Activated naive CD4-positive, alpha-beta T cell treated with anti-CD3 and anti-CD28 coated beads for 36 hours (primary cell): ENCODE measurements at regions of chr17 and their contacts with region 1.

Region 1: DNA sequence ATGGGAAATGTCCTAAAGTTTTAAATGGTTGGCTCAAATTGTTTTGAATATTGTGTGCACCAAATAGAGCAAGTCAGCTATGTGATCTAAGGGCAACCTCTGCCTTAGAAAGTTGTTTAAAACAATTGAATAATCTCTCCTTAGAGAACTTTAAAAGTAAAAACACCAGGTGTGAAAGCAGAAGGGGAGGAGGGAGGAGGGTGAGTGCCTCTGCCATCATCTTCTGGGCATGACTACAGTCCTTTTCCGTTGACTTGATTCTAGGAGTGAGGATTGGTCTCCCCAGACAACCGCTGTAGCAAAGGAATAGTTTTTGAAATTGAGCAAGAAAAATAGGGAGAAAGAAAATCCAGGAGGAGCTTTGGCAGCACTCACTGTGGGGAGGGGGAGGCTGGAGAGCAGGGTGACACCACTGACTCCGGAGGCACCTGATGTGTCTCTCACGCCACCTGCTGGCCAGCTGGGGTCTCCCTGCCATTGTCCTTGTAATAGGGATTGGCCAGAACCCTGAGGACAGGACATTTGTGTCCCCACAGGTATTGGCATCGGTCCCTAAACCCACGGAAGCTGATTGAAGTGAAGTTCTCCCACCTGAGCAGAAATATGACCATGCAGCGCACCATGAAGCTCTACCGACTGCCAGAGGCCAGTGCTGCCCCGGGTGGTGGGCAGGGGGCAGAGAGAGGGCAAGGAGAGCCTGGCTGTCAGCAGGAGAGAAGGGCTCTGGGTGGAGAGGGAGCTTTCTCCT is 33.3 kb downstream of the PLCD3 start:
- DNase-seq: peak; percentile 89
- H3K4me3 Mint-ChIP-seq: no peak overlapping the region
- H3K27ac Mint-ChIP-seq: no peak overlapping the region
- H3K4me1 Mint-ChIP-seq: no peaks in the 10 kb centered on the region
- H3K27me3 Mint-ChIP-seq: no peaks in the 10 kb centered on the region

Region 2: DNA sequence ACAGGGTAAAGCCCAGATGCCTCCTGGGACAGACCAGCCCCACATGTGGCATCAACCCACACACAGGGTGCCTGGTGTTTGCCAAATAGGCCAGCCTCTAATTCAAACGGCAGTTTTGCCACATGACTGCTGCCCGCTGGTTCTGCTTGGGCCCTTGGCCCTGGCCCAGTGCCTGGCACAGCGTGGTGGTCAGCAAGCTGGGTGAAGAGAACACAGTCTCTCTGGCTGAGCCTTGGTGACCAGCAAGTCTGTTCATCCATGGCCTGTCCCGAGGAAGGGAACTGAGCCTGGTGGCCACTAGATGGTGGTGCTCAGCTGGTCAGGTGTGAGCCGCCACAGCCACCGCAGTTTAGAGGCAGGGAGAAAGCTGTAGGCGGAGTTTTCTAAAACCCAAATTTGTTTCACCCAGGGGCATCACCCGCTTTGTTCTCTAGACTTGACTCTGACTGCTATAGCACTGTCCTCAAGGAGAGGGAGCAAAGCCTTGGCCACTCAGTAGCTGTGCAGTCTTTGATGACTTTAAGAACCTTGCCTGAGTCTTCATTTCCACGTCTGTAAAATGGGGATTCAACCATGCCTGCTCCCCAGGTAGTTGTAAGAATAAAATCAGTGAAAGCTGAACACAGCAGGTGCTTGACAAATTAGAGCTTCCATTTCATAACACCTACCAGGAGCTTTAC is 179.0 kb before region 1 on chr17:
- CTCF ChIA-PET with region 1: interaction called, 3 read pairs
- intact Hi-C with region 1: loop called (anchors 1 kb)
- DNase-seq: peak; percentile 84
- H3K4me3 Mint-ChIP-seq: no peak overlapping the region
- H3K27ac Mint-ChIP-seq: no peak overlapping the region
- H3K4me1 Mint-ChIP-seq: no peaks in the 10 kb centered on the region
- H3K27me3 Mint-ChIP-seq: peaks cover 18% of the 10 kb centered on the region

Region 3: GRCh38 chr17:44981221-44981968 is 117.6 kb before region 1 on chr17:
- CTCF ChIA-PET with region 1: no interaction called
- intact Hi-C with region 1: no loop called
- DNase-seq: no peak
- H3K4me3 Mint-ChIP-seq: no peak overlapping the region
- H3K27ac Mint-ChIP-seq: no peak overlapping the region
- H3K4me1 Mint-ChIP-seq: no peaks in the 10 kb centered on the region
- H3K27me3 Mint-ChIP-seq: peaks cover 16% of the 10 kb centered on the region

Region 4: DNA sequence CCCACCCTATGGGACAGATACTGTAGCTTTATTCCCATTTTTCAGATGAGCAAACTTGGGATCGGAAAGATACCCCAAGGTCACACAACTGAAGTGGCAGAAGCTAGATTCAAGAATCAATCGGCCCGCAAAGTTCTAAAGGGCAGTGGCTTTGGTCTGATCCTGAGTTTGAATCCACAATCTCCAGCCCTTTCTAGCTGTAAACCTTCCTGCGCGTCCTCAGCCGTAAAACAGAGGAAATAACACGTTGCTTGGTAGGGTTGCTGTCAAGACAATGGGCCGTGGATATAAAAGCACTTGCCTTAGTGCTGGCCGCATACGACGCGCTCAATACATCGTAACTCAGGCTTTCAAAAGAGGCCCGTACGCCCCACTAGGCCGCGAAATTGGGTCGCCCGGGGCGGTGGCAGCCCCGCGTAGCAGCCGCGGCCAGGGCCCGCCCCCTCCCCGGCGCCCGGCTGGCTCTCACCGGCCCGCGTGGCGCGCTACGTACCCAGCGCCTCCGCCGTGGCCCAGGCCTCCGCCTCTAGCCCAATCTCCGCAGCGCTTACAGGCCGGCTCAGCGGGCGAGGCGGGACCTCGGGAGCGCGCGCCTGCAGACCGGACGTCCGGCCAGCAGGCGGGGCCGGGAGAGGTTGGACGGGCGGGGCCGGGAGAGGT is 47.9 kb before region 1 on chr17 and contains the start of gene DCAKD:
- CTCF ChIA-PET with region 1: interaction called, 9 read pairs
- intact Hi-C with region 1: loop called (anchors 1 kb)
- DNase-seq: peak; percentile 93
- H3K4me3 Mint-ChIP-seq: peak within 1 kb of the TSS; percentile 82
- H3K27ac Mint-ChIP-seq: peak within 1 kb of the TSS; percentile 93
- H3K4me1 Mint-ChIP-seq: peaks cover 41% of the 10 kb centered on the region
- H3K27me3 Mint-ChIP-seq: no peaks in the 10 kb centered on the region
- total RNA-seq, gene DCAKD: 38.1 to 38.9 TPM

Region 5: GRCh38 chr17:45184144-45184543 is 85.1 kb after region 1 on chr17:
- CTCF ChIA-PET with region 1: no interaction called
- intact Hi-C with region 1: no loop called
- DNase-seq: no peak
- H3K4me3 Mint-ChIP-seq: no peak overlapping the region
- H3K27ac Mint-ChIP-seq: no peak overlapping the region
- H3K4me1 Mint-ChIP-seq: no peaks in the 10 kb centered on the region
- H3K27me3 Mint-ChIP-seq: no peaks in the 10 kb centered on the region